CD4-positive, alpha-beta T cell (primary cell): ENCODE measurements at regions of chr18 and their contacts with region 1.

Region 1: GRCh38 chr18:50356036-50356945 is 18.6 kb upstream of the SKA1 start:
- DNase-seq: peak in 3 of 14 experiments; percentile 13 to 43 (median 37)
- ATAC-seq: peak; percentile 16
- H3K4me3 ChIP-seq: no peak overlapping the region
- H3K4me3 Mint-ChIP-seq: no peak overlapping the region
- H3K27ac ChIP-seq: no peak overlapping the region
- H3K27ac Mint-ChIP-seq: no peak overlapping the region
- H3K4me1 ChIP-seq: peaks cover 6% of the 10 kb centered on the region
- H3K4me1 Mint-ChIP-seq: peaks cover 4% of the 10 kb centered on the region
- H3K27me3 ChIP-seq: peaks cover 3 to 9% of the 10 kb centered on the region in 2 experiments
- H3K27me3 Mint-ChIP-seq: peaks cover 36% of the 10 kb centered on the region
- CTCF ChIP-seq: no peak

Region 2: GRCh38 chr18:49510393-49511115 is 845.7 kb before region 1 on chr18:
- CTCF ChIA-PET with region 1: interaction called, 5 read pairs
- POLR2A ChIA-PET with region 1: no interaction called
- intact Hi-C with region 1: loop called in 1 of 2 experiments (anchors 1 kb)
- DNase-seq: peak; percentile 21 to 79 (median 37)
- ATAC-seq: peak; percentile 68
- H3K4me3 ChIP-seq: no peak overlapping the region
- H3K4me3 Mint-ChIP-seq: no peak overlapping the region
- H3K27ac ChIP-seq: no peak overlapping the region
- H3K27ac Mint-ChIP-seq: no peak overlapping the region
- H3K4me1 ChIP-seq: peaks cover 3% of the 10 kb centered on the region
- H3K4me1 Mint-ChIP-seq: no peaks in the 10 kb centered on the region
- H3K27me3 ChIP-seq: no peaks in the 10 kb centered on the region
- H3K27me3 Mint-ChIP-seq: peaks cover 27% of the 10 kb centered on the region
- CTCF ChIP-seq: peak; percentile 82

Region 3: DNA sequence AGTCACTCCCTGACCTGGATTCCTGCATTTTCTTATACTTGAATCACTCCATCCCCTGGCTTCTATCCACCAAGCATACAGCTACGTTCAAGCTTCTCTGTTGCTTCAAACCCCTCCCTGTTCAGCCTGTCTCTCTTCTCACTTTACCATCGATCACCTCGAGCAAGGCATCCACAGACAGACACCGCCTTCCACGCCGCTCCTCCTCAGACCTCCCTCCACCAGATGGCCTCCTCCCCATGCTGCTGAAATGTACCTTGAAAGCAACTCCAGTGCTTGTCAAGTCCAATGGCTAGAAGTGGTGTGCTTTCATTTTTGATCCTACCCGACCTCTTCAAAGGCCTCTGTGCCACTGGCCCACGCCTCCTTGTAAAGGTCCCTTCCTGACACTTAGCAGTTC is 411.6 kb before region 1 on chr18:
- CTCF ChIA-PET with region 1: no interaction called
- POLR2A ChIA-PET with region 1: no interaction called
- intact Hi-C with region 1: loop called in 1 of 2 experiments (anchors 5 kb)
- DNase-seq: peak in 5 of 14 experiments; percentile 4 to 35 (median 16)
- ATAC-seq: no peak
- H3K4me3 ChIP-seq: no peak overlapping the region
- H3K4me3 Mint-ChIP-seq: no peak overlapping the region
- H3K27ac ChIP-seq: no peak overlapping the region
- H3K27ac Mint-ChIP-seq: no peak overlapping the region
- H3K4me1 ChIP-seq: peaks cover 11% of the 10 kb centered on the region
- H3K4me1 Mint-ChIP-seq: peaks cover 18% of the 10 kb centered on the region
- H3K27me3 ChIP-seq: no peaks in the 10 kb centered on the region
- H3K27me3 Mint-ChIP-seq: no peaks in the 10 kb centered on the region
- CTCF ChIP-seq: no peak

Region 4: GRCh38 chr18:50203801-50204604 is 152.3 kb before region 1 on chr18:
- CTCF ChIA-PET with region 1: interaction called, 3 read pairs
- POLR2A ChIA-PET with region 1: no interaction called
- intact Hi-C with region 1: loop called in 1 of 2 experiments (anchors 5 kb)
- DNase-seq: peak in 2 of 14 experiments; percentile 30 to 36
- ATAC-seq: no peak
- H3K4me3 ChIP-seq: no peak overlapping the region
- H3K4me3 Mint-ChIP-seq: no peak overlapping the region
- H3K27ac ChIP-seq: no peak overlapping the region
- H3K27ac Mint-ChIP-seq: no peak overlapping the region
- H3K4me1 ChIP-seq: peaks cover 7% of the 10 kb centered on the region
- H3K4me1 Mint-ChIP-seq: peaks cover 8% of the 10 kb centered on the region
- H3K27me3 ChIP-seq: peaks cover 24 to 47% of the 10 kb centered on the region in 2 experiments
- H3K27me3 Mint-ChIP-seq: peaks cover 71% of the 10 kb centered on the region
- CTCF ChIP-seq: no peak

Region 5: DNA sequence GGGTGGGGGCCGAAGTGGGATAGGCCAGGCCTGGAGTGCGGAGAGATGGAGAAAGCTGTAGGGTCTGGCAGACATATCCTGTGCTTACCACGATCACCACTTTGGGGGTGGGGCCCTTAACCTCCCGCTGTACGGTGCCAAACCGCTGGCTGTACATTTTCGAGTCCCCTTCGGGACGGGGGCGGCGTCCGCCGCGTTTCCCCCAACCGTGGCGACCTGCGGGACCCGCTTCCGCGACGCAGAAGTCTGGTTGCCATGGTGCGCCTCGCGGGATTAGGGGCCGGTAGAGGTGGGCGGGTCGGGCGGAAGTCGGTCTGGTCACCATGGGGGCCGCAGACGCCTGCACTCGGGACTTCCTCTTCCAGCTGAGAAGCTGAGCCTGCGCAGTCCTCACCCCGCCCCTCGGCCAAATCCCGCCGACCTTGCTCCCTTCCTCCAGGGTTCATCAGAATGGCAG is 90.0 kb before region 1 on chr18 and contains the start of gene CFAP53:
- CTCF ChIA-PET with region 1: interaction called, 3 read pairs
- POLR2A ChIA-PET with region 1: interaction called, 6 read pairs
- intact Hi-C with region 1: loop called in 1 of 2 experiments (anchors 5 kb)
- DNase-seq: peak in 13 of 14 experiments; percentile 54 to 92 (median 80)
- ATAC-seq: peak; percentile 77
- H3K4me3 ChIP-seq: peak within 1 kb of the TSS; percentile 66
- H3K4me3 Mint-ChIP-seq: peak within 1 kb of the TSS; percentile 93
- H3K27ac ChIP-seq: peak within 1 kb of the TSS; percentile 13 to 64
- H3K27ac Mint-ChIP-seq: peak within 1 kb of the TSS; percentile 45
- H3K4me1 ChIP-seq: peaks cover 25% of the 10 kb centered on the region
- H3K4me1 Mint-ChIP-seq: peaks cover 30% of the 10 kb centered on the region
- H3K27me3 ChIP-seq: no peaks in the 10 kb centered on the region
- H3K27me3 Mint-ChIP-seq: no peaks in the 10 kb centered on the region
- CTCF ChIP-seq: no peak
- total RNA-seq, gene CFAP53: 0.33 to 0.47 TPM

Region 6: DNA sequence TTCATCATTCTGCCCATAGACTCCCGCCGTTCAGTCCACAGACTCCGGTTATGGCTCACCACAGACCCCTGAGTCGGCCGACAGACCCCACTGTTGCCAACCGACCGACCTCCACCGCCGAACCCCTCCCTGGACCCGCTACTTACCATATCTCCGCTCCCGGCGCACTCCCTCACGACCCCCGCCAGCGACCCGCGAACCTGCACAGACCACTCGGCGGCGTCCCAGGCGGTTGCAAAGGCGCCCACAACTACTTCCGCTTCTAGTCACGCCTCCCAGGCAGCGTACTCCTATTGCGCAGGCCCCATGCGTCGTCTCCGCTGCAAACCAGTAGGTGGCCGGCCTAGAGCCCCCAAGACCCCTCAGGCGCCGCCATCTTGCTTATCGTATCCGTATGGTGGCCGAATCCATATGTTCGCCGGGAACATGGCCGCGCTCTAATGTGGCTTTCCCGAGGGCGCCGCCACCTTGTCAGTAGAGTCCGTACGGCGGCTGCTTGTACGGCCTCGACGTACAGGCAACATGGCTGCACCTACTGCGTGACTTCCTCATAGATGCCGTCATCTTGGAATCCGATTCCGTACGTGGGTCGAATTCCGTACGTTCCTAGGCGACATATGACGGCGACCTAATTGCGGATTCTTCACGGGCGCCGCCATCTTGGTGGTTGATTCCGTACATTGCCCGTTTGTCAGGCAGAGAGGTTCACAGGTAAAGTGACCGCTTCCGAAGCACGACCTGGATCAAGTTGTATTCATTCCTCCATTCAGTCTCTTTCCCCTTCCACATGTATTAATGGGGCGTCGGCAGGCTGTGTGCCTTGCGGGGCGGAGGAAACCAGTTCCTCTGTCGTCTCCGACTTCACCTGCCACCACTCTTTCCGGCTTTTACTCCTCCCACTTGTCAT is 68.6 kb before region 1 on chr18 and contains the start of gene CXXC1:
- CTCF ChIA-PET with region 1: interaction called, 5 read pairs
- POLR2A ChIA-PET with region 1: no interaction called
- intact Hi-C with region 1: loop called (anchors 5 kb)
- DNase-seq: peak; percentile 96 to 99 (median 97)
- ATAC-seq: peak; percentile 85
- H3K4me3 ChIP-seq: peak within 1 kb of the TSS; percentile 85
- H3K4me3 Mint-ChIP-seq: peak within 1 kb of the TSS; percentile 96
- H3K27ac ChIP-seq: peak within 1 kb of the TSS; percentile 72 to 93
- H3K27ac Mint-ChIP-seq: peak within 1 kb of the TSS; percentile 98
- H3K4me1 ChIP-seq: peaks cover 24% of the 10 kb centered on the region
- H3K4me1 Mint-ChIP-seq: peaks cover 27% of the 10 kb centered on the region
- H3K27me3 ChIP-seq: no peaks in the 10 kb centered on the region
- H3K27me3 Mint-ChIP-seq: no peaks in the 10 kb centered on the region
- CTCF ChIP-seq: peak; percentile 61
- total RNA-seq, gene CXXC1: 120 to 128 TPM

Region 7: GRCh38 chr18:51110073-51110803 is 753.9 kb after region 1 on chr18:
- CTCF ChIA-PET with region 1: no interaction called
- POLR2A ChIA-PET with region 1: no interaction called
- intact Hi-C with region 1: no loop called
- DNase-seq: peak; percentile 31 to 76 (median 58)
- ATAC-seq: peak; percentile 55
- H3K4me3 ChIP-seq: no peak overlapping the region
- H3K4me3 Mint-ChIP-seq: no peak overlapping the region
- H3K27ac ChIP-seq: no peak overlapping the region
- H3K27ac Mint-ChIP-seq: no peak overlapping the region
- H3K4me1 ChIP-seq: peaks cover 17% of the 10 kb centered on the region
- H3K4me1 Mint-ChIP-seq: peaks cover 14% of the 10 kb centered on the region
- H3K27me3 ChIP-seq: no peaks in the 10 kb centered on the region
- H3K27me3 Mint-ChIP-seq: no peaks in the 10 kb centered on the region
- CTCF ChIP-seq: peak; percentile 96